Activated CD4-positive, alpha-beta memory T cell treated with anti-CD3 and anti-CD28 coated beads, Interleukin-2, amount 10 ng/mL, durations not matched to agents 7 days and 5 days (primary cell): ENCODE measurements at regions of chr12 and their contacts with region 1.

Region 1: GRCh38 chr12:452667-453210 is 7.0 kb upstream of the B4GALNT3 start:
- DNase-seq: peak; percentile 76
- H3K4me3 Mint-ChIP-seq: no peak overlapping the region
- H3K27ac Mint-ChIP-seq: no peak overlapping the region
- H3K4me1 Mint-ChIP-seq: peaks cover 3% of the 10 kb centered on the region
- H3K27me3 Mint-ChIP-seq: peaks cover 28% of the 10 kb centered on the region

Region 2: DNA sequence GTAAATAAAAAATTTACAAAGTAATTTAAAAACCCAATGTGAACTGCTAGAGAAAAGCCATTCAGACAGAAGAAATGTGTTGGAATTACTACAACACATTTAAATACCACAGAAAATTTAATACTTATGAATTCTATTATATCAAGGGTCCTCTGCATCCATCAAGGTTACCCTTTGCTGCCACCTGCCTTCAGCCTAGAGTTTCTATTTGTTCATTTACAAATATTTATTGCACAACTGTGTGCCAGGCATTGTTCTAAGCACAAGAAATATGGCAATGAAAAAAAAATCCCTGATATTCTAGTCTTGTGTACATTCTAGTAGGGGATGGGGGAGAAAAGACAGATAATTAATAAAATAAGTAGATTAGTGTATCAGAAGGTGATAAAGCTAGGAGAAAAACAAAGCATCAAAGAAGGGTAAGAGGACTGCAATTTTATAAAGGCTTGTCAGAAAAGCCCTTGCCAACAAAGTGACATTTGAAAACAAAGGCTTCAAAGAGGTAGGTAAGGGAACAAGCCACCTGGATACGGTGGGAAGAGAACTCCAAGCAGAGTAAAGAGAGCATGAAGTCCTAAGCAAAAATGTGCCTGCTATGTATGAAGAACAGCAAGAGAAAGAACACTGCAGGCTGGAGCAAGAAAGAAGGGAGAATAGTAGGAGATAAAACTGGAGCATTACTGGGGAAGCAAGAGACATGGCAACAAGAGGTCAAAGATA is 131.0 kb before region 1 on chr12:
- CTCF ChIA-PET with region 1: no interaction called
- POLR2A ChIA-PET with region 1: no interaction called
- DNase-seq: no peak
- H3K4me3 Mint-ChIP-seq: no peak overlapping the region
- H3K27ac Mint-ChIP-seq: no peak overlapping the region
- H3K4me1 Mint-ChIP-seq: peaks cover 12% of the 10 kb centered on the region
- H3K27me3 Mint-ChIP-seq: no peaks in the 10 kb centered on the region

Region 3: GRCh38 chr12:332581-333205 is 120.0 kb before region 1 on chr12:
- CTCF ChIA-PET with region 1: no interaction called
- POLR2A ChIA-PET with region 1: no interaction called
- DNase-seq: no peak
- H3K4me3 Mint-ChIP-seq: no peak overlapping the region
- H3K27ac Mint-ChIP-seq: no peak overlapping the region
- H3K4me1 Mint-ChIP-seq: no peaks in the 10 kb centered on the region
- H3K27me3 Mint-ChIP-seq: no peaks in the 10 kb centered on the region

Region 4: DNA sequence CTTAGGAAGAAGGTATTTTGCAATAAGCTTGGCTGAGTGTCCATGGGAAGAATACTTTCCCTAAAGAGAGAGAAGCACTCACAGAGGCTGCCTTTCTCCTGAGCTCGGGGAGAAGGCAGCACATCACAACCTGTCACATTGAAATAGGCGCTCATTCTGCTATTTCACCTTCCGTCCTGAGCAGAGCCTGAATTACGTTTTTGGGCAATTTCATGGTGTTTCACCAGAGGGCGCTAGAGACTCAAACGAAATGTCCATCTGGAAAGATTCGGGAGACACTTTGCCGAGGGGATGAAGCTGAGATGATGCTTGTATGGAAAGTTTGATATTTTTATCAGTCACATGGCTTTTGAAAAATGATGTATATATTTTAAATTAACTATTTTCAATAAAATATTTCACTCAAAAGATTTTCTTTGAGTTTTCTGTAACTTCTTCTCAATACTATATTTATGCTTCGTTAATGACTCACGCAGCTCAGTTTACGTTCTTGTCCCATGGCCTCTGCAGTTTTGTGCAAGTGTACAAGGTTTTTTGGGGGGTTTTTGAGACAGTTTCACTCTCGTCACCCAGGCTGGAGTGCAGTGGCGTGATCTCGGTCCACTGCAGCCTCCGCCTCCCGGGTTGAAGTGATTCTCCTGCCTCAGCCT is 10.4 kb before region 1 on chr12:
- CTCF ChIA-PET with region 1: interaction called, 28 read pairs
- POLR2A ChIA-PET with region 1: no interaction called
- DNase-seq: peak; percentile 41
- H3K4me3 Mint-ChIP-seq: no peak overlapping the region
- H3K27ac Mint-ChIP-seq: no peak overlapping the region
- H3K4me1 Mint-ChIP-seq: peaks cover under 1% of the 10 kb centered on the region
- H3K27me3 Mint-ChIP-seq: peaks cover 2% of the 10 kb centered on the region

Region 5: DNA sequence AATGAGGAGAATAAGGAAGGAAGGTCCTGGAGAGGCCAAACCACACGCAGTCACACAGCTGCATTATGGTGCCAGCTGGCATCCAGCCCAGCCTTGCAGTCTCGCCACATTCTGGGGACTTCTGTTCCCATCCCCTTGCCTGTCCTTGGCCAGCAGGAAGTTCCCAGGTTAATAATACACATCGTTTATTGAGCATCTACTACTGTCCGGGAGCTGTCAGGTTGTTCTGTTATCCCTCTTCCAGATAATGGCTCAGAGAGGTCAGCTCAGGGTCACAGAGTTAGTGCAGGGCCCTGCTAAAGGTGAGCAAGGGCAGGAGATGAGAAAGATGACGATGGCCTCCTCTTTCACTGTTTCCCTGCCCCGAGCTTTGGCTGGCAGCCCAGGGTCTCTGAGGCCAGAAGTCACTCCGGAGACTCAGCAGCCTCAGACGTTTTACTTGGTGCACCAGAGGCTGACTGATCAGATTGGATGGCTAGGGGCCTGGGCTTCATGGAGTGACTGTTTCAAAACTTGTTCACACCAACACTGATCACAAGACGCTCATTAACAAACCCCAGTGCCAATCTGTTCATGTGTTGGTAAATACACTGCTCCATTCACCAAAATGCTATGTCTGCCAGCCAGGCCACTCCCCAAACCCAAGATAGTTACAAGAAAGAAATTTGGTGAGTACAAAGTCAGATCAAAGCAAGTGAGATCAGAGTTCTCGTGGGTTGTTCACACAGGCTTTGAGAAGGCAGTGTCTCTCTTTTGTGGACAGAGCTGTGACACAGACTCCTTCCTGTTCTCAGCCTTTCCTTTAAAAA is 86.2 kb after region 1 on chr12:
- CTCF ChIA-PET with region 1: interaction called, 52 read pairs
- POLR2A ChIA-PET with region 1: interaction called, 3 read pairs
- DNase-seq: no peak
- H3K4me3 Mint-ChIP-seq: no peak overlapping the region
- H3K27ac Mint-ChIP-seq: peak overlapping the region; percentile 41
- H3K4me1 Mint-ChIP-seq: peaks cover 8% of the 10 kb centered on the region
- H3K27me3 Mint-ChIP-seq: no peaks in the 10 kb centered on the region

Region 6: DNA sequence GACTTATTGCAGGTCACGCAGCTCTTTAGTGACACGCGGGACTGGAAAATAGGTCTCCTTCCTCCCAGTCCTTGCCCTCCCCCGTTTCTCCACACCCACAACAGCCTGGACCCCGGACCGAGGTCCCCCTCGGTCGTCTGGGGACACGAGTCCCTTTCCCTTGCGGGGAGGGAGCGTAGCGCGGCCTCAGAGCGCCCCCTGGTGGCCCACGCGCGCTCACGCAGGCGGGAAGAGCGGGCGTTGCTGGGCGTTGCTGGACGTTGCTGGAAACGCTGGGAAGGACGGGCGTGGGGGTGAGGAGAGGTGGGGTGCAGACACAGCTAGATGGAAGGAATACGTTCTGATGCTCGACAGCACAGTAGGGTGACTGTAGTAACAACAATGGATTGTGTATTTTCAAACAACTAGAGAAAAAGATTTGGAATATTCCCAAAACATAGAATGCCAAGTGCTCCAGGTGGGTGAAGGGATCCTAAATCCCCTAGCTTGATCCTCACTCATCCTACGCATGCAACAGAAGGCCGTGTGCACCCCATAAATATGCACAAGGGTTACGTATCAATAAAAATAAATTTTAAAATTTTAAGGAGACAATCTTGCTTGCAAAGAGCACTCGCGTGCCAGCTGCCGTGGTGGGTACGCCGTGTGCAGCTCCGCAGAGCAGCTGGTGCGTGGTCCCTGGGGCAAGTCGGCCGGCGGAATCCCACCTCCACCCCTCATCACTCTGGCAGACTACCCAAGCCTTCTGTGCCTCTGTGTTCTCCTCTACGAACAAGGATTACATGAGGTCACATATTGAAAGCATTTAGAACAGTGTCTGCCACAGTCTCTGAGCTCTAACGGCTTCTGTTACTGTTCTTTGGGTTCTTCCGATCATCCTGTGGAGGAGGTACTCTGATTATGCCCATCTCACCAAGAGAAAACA is 94.4 kb after region 1 on chr12:
- CTCF ChIA-PET with region 1: interaction called, 50 read pairs
- POLR2A ChIA-PET with region 1: no interaction called
- DNase-seq: peak; percentile 72
- H3K4me3 Mint-ChIP-seq: no peak overlapping the region
- H3K27ac Mint-ChIP-seq: no peak overlapping the region
- H3K4me1 Mint-ChIP-seq: peaks cover 19% of the 10 kb centered on the region
- H3K27me3 Mint-ChIP-seq: peaks cover 15% of the 10 kb centered on the region

Region 7: GRCh38 chr12:552466-552865 is 99.7 kb after region 1 on chr12:
- CTCF ChIA-PET with region 1: interaction called, 49 read pairs
- POLR2A ChIA-PET with region 1: no interaction called
- DNase-seq: no peak
- H3K4me3 Mint-ChIP-seq: no peak overlapping the region
- H3K27ac Mint-ChIP-seq: no peak overlapping the region
- H3K4me1 Mint-ChIP-seq: peaks cover 32% of the 10 kb centered on the region
- H3K27me3 Mint-ChIP-seq: peaks cover 5% of the 10 kb centered on the region

Region 8: DNA sequence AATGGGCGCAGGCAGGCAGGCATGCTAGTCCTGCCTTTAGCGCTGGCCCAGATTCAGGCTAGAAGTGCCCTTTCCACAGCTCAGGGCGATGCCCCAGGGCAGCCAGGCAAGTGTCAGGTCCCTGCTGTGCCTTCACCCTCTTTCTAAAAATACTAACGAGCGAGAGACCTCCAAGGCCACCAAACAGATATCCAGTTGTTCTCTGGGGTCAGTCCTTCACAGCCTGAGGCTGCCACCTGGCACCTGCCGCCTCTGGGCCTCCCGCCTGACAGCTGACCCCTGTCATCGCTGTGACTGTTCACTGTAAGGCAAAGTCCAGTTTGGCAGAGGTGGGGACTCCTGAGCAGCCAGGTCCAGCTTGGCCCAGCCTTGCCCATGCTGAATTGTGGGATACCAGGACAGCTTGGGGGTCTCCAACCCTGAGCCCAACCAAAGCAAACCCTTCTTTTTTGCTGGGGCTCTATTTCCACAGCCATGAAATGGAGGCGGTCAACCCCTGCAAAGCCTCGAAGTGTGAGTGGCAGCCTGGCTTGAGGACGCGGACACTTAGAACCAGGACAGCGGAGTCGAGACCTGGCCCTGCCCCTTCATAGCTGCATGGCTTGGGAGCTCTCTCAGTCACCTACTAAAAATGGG is 130.6 kb after region 1 on chr12:
- CTCF ChIA-PET with region 1: no interaction called
- POLR2A ChIA-PET with region 1: no interaction called
- DNase-seq: no peak
- H3K4me3 Mint-ChIP-seq: no peak overlapping the region
- H3K27ac Mint-ChIP-seq: no peak overlapping the region
- H3K4me1 Mint-ChIP-seq: no peaks in the 10 kb centered on the region
- H3K27me3 Mint-ChIP-seq: peaks cover 2% of the 10 kb centered on the region